Activated B cell treated with CpG ODN at 0.5 μM for 24 hours (primary cell): ENCODE measurements at regions of chr14 and their contacts with region 1.

Region 1: DNA sequence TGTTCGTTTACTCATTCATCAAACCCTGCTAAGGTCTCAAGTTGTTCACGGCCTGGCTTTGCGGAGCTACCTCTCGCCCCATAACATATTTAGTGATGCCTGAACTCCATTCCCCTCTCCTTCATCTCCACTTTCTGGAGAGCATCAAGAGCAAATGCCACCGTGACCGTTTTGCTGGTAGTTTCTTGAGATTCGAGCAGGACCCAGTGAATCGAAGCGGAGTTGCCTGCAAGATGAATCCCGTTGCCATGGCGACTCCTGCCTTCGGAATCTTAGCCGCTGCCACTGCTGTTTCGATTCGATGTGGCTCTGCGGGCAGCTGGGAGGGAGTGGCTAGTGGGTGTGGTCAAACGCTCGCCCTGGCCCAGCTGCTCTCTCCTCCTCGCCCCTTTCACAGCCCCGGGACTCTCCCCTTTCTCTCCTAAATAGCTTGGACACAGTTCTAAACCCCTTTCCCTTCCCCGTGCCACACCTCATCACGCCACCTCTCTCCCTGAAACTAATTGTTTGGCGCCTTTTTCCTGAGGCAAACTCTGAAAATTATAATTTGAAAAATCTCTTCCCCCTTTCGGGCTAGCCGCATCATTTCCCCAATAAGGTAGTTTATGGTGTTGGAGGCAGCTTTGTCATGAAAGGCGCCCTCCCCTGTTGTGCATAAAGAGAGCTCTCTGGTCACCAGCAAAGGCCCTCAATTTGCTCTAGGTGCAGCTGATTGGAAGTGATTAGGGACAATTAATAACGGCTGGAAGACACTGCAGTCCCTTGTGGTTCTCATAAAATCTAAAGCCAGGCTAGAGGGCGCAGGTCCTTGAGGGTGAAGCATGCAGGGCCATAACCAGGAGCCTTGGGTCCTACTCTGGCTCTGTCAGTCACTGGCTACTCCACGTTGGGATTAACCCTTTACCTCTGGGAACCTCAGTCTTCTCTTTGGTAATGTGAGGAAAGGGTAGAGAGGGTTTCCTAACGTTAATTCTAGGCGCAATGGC is 1.6 kb downstream of the DAAM1 start:
- DNase-seq: peak; percentile 60
- ATAC-seq: peak; percentile 10
- H3K4me3 Mint-ChIP-seq: peak overlapping the region; percentile 93
- H3K27ac Mint-ChIP-seq: peak overlapping the region; percentile 87
- H3K4me1 Mint-ChIP-seq: peaks cover 21% of the 10 kb centered on the region
- H3K27me3 Mint-ChIP-seq: peaks cover 5% of the 10 kb centered on the region
- CTCF ChIP-seq: no peak

Region 2: DNA sequence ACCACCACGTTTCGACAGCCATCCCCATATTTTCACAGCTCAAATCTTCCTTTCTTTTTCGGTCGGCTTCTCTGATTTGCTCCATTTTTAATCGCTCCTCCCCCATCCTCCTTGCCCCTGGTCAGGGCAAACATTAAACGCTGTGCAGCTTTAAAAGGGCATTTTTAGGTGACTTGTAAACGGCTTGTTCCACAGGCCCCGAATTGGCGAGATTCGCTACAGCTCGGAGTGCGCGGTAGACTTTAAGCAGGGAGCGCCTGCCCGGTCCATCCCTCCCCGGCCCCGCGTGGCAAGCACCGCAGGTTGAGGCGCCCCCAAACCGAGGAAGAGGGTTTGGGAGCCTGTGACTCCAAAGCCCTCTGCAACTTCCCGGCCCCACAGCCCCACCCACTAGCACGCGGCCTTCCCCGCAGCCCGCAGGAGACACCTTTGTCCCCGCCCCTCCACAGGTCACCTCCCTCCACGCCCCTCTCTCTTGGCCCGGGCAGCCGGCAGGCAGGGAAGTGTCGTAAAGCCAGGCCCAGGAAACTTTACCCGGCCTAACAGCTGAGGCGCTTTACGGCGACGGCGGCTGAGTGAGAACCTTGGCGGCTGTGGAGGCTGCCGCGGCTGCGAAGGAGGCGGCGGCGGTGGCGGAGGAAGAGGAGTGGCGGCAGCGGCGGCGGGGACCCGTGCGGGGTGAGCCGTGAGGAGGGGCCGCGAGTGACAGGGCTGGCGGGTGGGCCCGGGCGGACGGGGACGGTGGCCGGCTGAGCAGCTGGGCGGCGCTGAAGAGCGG is 1799.9 kb before region 1 on chr14 and contains the start of gene NAA30:
- CTCF ChIA-PET with region 1: no interaction called
- POLR2A ChIA-PET with region 1: no interaction called
- intact Hi-C with region 1: loop called (anchors 2 kb)
- DNase-seq: peak; percentile 89
- ATAC-seq: peak; percentile 96
- H3K4me3 Mint-ChIP-seq: peak within 1 kb of the TSS; percentile 88
- H3K27ac Mint-ChIP-seq: peak within 1 kb of the TSS; percentile 89
- H3K4me1 Mint-ChIP-seq: peaks cover 40% of the 10 kb centered on the region
- H3K27me3 Mint-ChIP-seq: peaks cover 1% of the 10 kb centered on the region
- CTCF ChIP-seq: no peak
- total RNA-seq, gene NAA30: 12.8 and 14.6 TPM in 2 replicates

Region 3: GRCh38 chr14:58060077-58060476 is 1130.0 kb before region 1 on chr14:
- CTCF ChIA-PET with region 1: no interaction called
- POLR2A ChIA-PET with region 1: no interaction called
- intact Hi-C with region 1: no loop called
- DNase-seq: no peak
- ATAC-seq: no peak
- H3K4me3 Mint-ChIP-seq: no peak overlapping the region
- H3K27ac Mint-ChIP-seq: no peak overlapping the region
- H3K4me1 Mint-ChIP-seq: no peaks in the 10 kb centered on the region
- H3K27me3 Mint-ChIP-seq: peaks cover 14% of the 10 kb centered on the region
- CTCF ChIP-seq: no peak

Region 4: DNA sequence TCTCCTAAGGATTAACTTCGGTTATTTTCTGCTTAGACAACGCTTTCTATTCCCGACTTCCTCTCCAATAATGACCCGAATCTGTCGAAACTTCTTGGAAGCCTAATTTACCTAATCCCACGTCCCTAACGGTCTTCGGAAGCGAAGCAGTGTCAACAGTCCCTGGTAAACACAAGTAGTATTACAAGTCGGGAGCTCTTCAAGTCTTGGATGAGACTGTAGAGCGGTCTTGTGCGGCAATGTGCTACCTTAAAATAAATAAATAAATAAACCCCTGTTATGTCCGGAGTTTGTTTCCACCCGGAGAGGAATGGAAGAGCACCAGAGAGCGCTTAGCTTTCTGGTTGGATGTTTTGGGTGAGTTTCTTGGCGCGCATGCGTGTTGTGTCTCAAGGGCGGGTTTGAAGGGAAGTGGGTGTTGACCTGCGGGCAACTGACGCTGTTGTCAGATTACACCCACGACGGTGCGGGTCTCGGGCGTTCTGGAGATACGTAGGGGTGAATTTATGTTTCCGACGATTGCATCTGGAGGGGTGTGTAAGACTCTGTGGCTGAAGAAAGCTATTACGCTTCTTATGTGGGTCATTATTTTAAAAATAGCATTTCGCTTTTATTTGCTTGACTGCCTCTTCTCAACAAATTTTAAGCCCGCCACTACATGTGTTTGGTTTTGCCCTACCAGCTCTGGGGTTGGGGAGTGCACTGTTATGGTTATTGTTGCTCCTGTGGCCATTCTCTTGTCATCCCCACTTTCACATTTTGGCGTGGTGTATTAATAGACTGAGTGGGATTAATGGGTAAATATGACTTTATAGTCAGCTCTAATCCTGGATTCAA is 762.6 kb before region 1 on chr14 and contains the starts of genes KIAA0586 and TIMM9:
- CTCF ChIA-PET with region 1: no interaction called
- POLR2A ChIA-PET with region 1: no interaction called
- intact Hi-C with region 1: loop called (anchors 1 kb)
- DNase-seq: peak; percentile 85
- ATAC-seq: peak; percentile 93
- H3K4me3 Mint-ChIP-seq: peak within 1 kb of the TSS; percentile 94
- H3K27ac Mint-ChIP-seq: peak within 1 kb of the TSS; percentile 97
- H3K4me1 Mint-ChIP-seq: peaks cover 46% of the 10 kb centered on the region
- H3K27me3 Mint-ChIP-seq: no peaks in the 10 kb centered on the region
- CTCF ChIP-seq: no peak
- total RNA-seq, gene KIAA0586: 18.3 and 19.8 TPM in 2 replicates
- total RNA-seq, gene TIMM9: 29.1 and 35.7 TPM in 2 replicates

Region 5: DNA sequence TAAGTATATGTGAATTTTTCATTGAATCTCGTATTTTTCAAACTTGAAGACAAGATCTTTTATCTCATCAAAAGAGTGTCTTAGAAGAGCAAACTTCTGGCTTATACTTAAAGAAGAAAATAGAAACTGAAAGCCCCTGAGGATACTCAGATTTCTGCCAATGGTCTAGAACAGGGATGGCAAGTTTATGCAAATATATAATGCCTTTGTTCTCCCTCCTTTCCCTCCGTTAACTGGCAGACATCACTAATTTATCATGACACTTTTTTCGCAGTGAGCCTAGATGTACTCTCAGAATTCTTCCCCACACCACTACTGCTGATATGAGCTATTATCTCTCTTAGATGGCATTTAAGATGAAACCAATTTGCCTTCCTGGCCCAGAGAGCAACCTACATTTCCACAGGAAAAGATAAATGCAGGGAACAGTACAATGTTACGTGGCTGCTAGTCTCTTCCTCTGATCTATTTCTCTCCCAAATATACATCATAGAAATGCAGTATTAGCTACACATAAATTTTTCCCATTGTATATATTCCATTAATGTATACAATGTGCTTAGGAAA is 41.7 kb before region 1 on chr14:
- CTCF ChIA-PET with region 1: interaction called, 3 read pairs
- POLR2A ChIA-PET with region 1: no interaction called
- intact Hi-C with region 1: loop called (anchors 1 kb)
- DNase-seq: no peak
- ATAC-seq: peak; percentile 75
- H3K4me3 Mint-ChIP-seq: no peak overlapping the region
- H3K27ac Mint-ChIP-seq: no peak overlapping the region
- H3K4me1 Mint-ChIP-seq: peaks cover 40% of the 10 kb centered on the region
- H3K27me3 Mint-ChIP-seq: no peaks in the 10 kb centered on the region
- CTCF ChIP-seq: no peak

Region 6: GRCh38 chr14:59275653-59276052 is 85.6 kb after region 1 on chr14:
- CTCF ChIA-PET with region 1: interaction called, 4 read pairs
- POLR2A ChIA-PET with region 1: interaction called, 8 read pairs
- intact Hi-C with region 1: loop called (anchors 1 kb)
- DNase-seq: no peak
- ATAC-seq: peak; percentile 87
- H3K4me3 Mint-ChIP-seq: peak overlapping the region; percentile 36
- H3K27ac Mint-ChIP-seq: peak overlapping the region; percentile 80
- H3K4me1 Mint-ChIP-seq: peaks cover 27% of the 10 kb centered on the region
- H3K27me3 Mint-ChIP-seq: no peaks in the 10 kb centered on the region
- CTCF ChIP-seq: no peak

Region 7: GRCh38 chr14:59483900-59484638 is 294.0 kb after region 1 on chr14 and contains the starts of genes JKAMP and L3HYPDH:
- CTCF ChIA-PET with region 1: interaction called, 5 read pairs
- POLR2A ChIA-PET with region 1: interaction called, 12 read pairs
- intact Hi-C with region 1: loop called (anchors 1 kb)
- DNase-seq: peak; percentile 96
- ATAC-seq: peak; percentile 92
- H3K4me3 Mint-ChIP-seq: peak within 1 kb of the TSS; percentile 98
- H3K27ac Mint-ChIP-seq: peak within 1 kb of the TSS; percentile 96
- H3K4me1 Mint-ChIP-seq: peaks cover 52% of the 10 kb centered on the region
- H3K27me3 Mint-ChIP-seq: no peaks in the 10 kb centered on the region
- CTCF ChIP-seq: no peak
- total RNA-seq, gene JKAMP: 18.1 and 28.8 TPM in 2 replicates
- total RNA-seq, gene L3HYPDH: 22.1 and 30.2 TPM in 2 replicates

Region 8: GRCh38 chr14:59600211-59600945 is 410.3 kb after region 1 on chr14:
- CTCF ChIA-PET with region 1: no interaction called
- POLR2A ChIA-PET with region 1: no interaction called
- intact Hi-C with region 1: no loop called
- DNase-seq: no peak
- ATAC-seq: no peak
- H3K4me3 Mint-ChIP-seq: no peak overlapping the region
- H3K27ac Mint-ChIP-seq: no peak overlapping the region
- H3K4me1 Mint-ChIP-seq: no peaks in the 10 kb centered on the region
- H3K27me3 Mint-ChIP-seq: peaks cover 20% of the 10 kb centered on the region
- CTCF ChIP-seq: no peak